ENCODE measurements at regions of chr1 and their contacts with region 1.

Region 1: DNA sequence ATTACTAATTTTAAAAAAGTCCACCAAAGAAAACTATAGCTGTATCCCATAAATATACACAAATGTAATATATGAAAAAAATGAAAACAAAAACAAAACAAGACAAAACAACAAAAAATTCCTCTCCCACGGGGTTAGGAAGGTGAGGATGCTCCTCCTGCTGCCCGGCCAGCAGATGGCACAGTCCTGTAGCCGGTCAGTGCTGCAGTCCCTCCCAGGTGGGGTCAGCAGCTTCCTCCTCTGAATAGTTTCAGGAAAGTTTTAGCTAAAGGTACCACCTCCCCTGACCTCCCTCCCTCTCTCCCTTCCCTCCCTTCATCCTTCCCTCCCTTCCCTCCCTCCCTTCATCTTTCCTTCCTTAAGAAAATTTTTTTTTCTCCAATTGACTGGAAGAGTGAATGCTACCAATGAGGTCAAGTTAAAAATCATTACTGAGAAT is 67.8 kb upstream of the BCL10 start:
- DNase-seq: peak in 1 of 2 experiments; percentile 86
- H3K4me3 ChIP-seq: no peak overlapping the region
- H3K27ac ChIP-seq: no peak overlapping the region
- H3K4me1 ChIP-seq: peaks cover 0 to 7% (median 2%) of the 10 kb centered on the region in 4 experiments; a peak in 3 of 7 replicates
- H3K27me3 ChIP-seq: no peaks in the 10 kb centered on the region
- CTCF ChIP-seq: peak; percentile 81 to 95 (median 88)
- EP300 ChIP-seq: peak in 1 of 2 experiments; percentile 16; a peak in 1 of 3 replicates
- POLR2A ChIP-seq: no peak
- RAD21 ChIP-seq: peak; percentile 85 to 86

Region 2: GRCh38 chr1:84919461-84919970 is 424.8 kb before region 1 on chr1:
- CTCF ChIA-PET with region 1: no interaction called
- POLR2A ChIA-PET with region 1: no interaction called
- DNase-seq: peak in 1 of 2 experiments; percentile 16
- H3K4me3 ChIP-seq: no peak overlapping the region
- H3K27ac ChIP-seq: no peak overlapping the region
- H3K4me1 ChIP-seq: no peaks in the 10 kb centered on the region
- H3K27me3 ChIP-seq: no peaks in the 10 kb centered on the region
- CTCF ChIP-seq: no peak
- EP300 ChIP-seq: no peak
- POLR2A ChIP-seq: no peak
- RAD21 ChIP-seq: no peak

Region 3: DNA sequence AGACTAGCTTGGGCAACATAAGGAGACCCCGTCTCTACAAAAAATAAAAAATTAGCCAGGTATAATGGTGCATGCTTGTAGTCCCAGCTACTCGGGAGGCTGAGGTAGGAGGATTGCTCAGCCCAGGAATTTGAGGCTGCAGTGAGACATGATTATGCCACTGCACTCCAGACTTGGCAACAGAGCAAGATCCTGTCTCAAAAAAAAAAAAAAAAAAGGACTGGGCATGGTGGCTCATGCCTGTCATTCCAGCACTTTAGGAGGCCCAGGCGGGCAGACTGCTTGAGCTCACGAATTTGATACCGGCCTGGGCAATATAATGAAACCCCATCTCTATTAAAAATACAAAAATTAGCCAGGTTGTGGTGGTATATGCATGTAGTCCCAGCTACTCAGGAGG is 20.5 kb before region 1 on chr1:
- CTCF ChIA-PET with region 1: interaction called, 10 read pairs
- POLR2A ChIA-PET with region 1: no interaction called
- DNase-seq: no peak
- H3K4me3 ChIP-seq: no peak overlapping the region
- H3K27ac ChIP-seq: no peak overlapping the region
- H3K4me1 ChIP-seq: peaks cover 0 to 9% (median 4%) of the 10 kb centered on the region in 4 experiments; a peak in 4 of 7 replicates
- H3K27me3 ChIP-seq: no peaks in the 10 kb centered on the region
- CTCF ChIP-seq: no peak
- EP300 ChIP-seq: no peak
- POLR2A ChIP-seq: no peak
- RAD21 ChIP-seq: no peak

Region 4: DNA sequence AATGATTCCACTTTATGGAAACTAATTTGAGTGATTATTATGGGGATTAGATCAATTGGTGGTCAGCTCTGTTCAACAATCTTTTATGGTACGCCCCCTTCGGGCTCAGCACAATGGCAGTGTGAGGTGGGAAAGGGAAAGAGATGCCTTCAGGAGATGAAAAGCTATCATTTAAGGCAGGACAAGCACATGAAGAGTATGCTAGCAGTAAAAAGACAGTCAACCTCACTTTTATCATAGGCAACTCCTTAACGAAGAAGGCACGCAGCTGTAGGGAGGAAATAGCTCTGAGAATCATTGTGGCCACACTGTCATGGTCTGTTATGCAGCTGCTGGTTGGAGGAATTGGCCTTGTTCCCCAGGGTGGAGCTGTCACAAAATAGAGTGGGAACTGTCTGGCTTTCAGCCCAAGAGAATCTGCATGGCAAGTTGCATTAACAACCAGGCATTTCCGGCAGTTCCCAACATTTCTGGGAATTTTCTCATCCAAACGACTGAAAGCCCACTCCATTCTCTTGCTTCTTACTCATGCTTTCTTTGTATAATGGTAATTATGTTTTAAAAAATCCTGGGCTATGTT is 13.5 kb before region 1 on chr1:
- CTCF ChIA-PET with region 1: interaction called, 11 read pairs
- POLR2A ChIA-PET with region 1: interaction called, 3 read pairs
- DNase-seq: no peak
- H3K4me3 ChIP-seq: no peak overlapping the region
- H3K27ac ChIP-seq: no peak overlapping the region
- H3K4me1 ChIP-seq: peaks cover 0 to 16% (median 1%) of the 10 kb centered on the region in 4 experiments; a peak in 4 of 7 replicates
- H3K27me3 ChIP-seq: no peaks in the 10 kb centered on the region
- CTCF ChIP-seq: no peak
- EP300 ChIP-seq: no peak
- POLR2A ChIP-seq: no peak
- RAD21 ChIP-seq: no peak

Region 5: DNA sequence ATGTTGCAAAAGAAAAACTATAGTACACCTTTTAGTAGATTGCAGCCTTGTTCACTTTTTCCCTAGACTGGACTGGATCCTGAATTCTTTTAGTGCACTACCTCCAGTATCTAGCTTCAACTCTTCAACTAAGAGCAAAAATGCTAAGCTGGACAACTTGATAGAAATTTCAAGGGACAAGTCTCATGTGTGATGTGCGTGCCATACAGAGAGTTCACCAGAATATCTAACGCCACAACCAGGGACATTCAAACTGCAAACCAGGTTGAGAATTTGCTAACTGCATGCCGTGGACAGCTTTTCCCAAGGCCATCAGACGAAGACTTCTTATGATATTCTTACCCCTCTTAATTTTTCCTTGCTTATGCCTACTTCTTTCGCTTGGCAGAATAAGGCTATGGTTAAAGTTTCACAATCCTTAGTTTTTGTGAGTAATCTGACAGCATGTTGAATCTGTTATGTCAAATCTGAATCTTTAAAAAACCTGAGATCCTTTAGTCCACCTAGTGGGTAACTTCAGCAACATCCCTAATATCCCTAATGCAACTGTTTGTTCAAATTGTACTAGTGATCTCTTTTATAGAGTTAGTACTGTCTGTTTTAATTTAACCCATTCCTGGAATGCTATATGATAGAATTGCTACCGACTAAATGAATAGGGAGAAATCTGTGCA is 54.3 kb after region 1 on chr1:
- CTCF ChIA-PET with region 1: interaction called, 13 read pairs
- POLR2A ChIA-PET with region 1: no interaction called
- DNase-seq: no peak
- H3K4me3 ChIP-seq: no peak overlapping the region
- H3K27ac ChIP-seq: no peak overlapping the region
- H3K4me1 ChIP-seq: peaks cover 0 to 9% (median 4%) of the 10 kb centered on the region in 4 experiments; a peak in 4 of 7 replicates
- H3K27me3 ChIP-seq: no peaks in the 10 kb centered on the region
- CTCF ChIP-seq: peak in 1 of 3 experiments; percentile 19; a peak in 2 of 4 replicates
- EP300 ChIP-seq: no peak
- POLR2A ChIP-seq: no peak
- RAD21 ChIP-seq: peak; percentile 21 to 32; a peak in 1 of 4 replicates

Region 6: GRCh38 chr1:85502625-85503083 is 158.4 kb after region 1 on chr1:
- CTCF ChIA-PET with region 1: interaction called, 15 read pairs
- POLR2A ChIA-PET with region 1: no interaction called
- DNase-seq: peak; percentile 3 to 59
- H3K4me3 ChIP-seq: no peak overlapping the region
- H3K27ac ChIP-seq: no peak overlapping the region
- H3K4me1 ChIP-seq: no peaks in the 10 kb centered on the region
- H3K27me3 ChIP-seq: peaks cover 0 to 2% (median 0%) of the 10 kb centered on the region in 4 experiments; a peak in 1 of 7 replicates
- CTCF ChIP-seq: peak in 2 of 3 experiments; percentile 59 to 66; a peak in 3 of 4 replicates
- EP300 ChIP-seq: no peak
- POLR2A ChIP-seq: no peak
- RAD21 ChIP-seq: peak; percentile 62 to 72